Psoas muscle (tissue), 8 donors: ENCODE measurements at regions of chr12 and their contacts with region 1.

Region 1: DNA sequence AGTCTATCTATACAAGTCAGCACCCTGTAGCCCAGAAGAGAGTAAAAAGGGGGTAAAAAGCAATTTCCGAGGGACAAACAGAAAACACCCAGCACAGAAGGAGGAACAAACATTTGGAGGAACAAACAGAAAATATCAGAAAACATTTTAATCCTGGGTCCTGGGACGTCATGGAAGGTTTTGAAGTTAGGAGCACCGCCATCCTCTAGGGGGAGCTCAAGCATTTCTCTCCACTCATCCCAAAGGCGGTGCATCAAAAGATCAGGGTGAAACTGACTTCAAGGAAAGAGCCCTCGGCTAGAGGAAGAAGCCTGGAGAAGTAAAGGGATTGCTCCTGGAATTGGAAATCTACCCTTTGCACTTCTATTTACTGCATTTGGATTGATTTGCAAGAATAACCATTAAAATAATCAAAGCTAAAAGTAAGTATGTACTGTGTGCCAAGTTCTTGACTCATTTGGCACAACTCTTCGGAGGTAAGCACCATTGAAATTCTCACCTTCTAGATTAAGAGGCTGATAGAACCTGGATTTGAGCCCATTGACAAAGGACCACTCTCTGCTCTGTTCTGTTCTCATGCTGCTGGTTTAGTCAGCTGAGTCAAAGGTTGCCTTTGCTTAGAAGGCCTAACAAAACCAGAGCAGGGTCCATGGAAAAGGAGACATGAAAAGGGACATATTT is 17.2 kb upstream of the POC1B start:
- DNase-seq: peak; percentile 31 to 62
- ATAC-seq: peak; percentile 70 to 88 (median 76)
- H3K4me3 ChIP-seq: no peak overlapping the region
- H3K27ac ChIP-seq: no peak overlapping the region
- H3K4me1 ChIP-seq: peaks cover 6% of the 10 kb centered on the region
- H3K27me3 ChIP-seq: no peaks in the 10 kb centered on the region
- CTCF ChIP-seq: peak; percentile 88

Region 2: DNA sequence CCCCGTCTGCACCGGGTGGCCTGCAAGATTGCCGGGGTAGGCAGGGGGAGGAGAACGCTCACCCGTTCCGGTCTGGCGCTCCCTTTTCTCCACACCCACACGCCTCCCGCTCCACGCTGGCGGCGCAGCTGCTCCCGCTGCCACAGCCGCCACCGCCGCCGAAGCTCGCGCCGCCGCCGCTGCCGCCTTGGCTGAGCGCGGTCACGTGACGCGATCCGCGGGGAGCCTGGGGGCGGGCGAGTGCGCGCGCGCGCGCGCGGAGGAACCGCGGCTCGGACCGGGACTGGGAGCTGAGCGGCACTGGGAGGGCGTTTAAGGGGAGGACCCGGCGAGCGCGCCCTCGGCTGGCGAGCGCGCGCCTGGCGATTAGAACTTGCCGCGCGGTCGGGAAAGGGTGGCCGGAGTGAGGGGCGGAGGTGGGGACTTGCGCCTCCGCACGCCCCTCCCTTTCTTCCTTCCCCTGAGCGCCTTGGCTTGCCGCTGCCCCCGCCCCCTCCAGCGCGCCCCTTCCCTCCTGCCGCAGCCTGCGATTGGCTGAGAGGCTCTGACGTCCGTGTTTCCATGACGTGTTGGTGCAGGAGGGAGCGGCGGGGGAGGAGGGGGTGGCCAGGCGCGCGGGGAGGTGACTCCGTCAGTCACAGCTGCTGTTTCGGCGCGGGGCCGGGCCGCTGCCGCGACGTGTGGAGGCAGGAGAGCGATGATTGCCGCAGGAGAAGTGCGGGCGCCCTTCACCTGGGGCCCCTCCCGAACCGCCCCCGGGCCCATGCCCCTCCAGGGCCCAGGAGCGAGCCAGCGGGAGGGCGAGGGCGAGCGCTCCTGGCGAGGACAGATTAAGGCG is 166.3 kb after region 1 on chr12:
- intact Hi-C with region 1: loop called in 1 of 2 experiments (anchors 5 kb)
- DNase-seq: peak; percentile 99
- ATAC-seq: peak; percentile 89 to 91 (median 90)
- H3K4me3 ChIP-seq: peak overlapping the region; percentile 91
- H3K27ac ChIP-seq: peak overlapping the region; percentile 94
- H3K4me1 ChIP-seq: peaks cover 23% of the 10 kb centered on the region
- H3K27me3 ChIP-seq: no peaks in the 10 kb centered on the region
- CTCF ChIP-seq: no peak

Region 3: DNA sequence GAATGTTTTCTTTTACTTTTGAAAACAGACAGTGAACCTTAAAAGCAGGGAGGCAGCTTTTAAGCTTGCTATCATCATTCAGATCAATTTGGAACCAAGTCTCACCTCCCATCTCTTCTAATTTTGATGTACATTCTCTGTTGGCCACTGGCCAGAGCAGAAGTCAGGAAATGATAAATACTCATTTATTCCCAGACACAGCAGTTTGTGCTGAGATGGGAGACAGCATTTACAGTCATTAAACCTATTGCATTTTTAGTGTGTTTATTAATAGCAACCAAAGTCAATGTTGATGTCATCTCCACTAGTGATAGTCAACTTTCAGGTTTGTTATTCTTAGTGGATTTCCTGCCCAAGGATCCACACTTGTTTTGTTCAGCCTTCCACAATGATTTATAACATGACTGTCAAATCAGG is 485.6 kb after region 1 on chr12:
- intact Hi-C with region 1: loop called in 1 of 2 experiments (anchors 10 kb)
- DNase-seq: no peak
- ATAC-seq: peak in 3 of 4 donors; percentile 41 to 76 (median 68)
- H3K4me3 ChIP-seq: no peak overlapping the region
- H3K27ac ChIP-seq: peak overlapping the region; percentile 78
- H3K4me1 ChIP-seq: peaks cover 15% of the 10 kb centered on the region
- H3K27me3 ChIP-seq: no peaks in the 10 kb centered on the region
- CTCF ChIP-seq: no peak

Region 4: GRCh38 chr12:90058704-90059103 is 515.7 kb after region 1 on chr12:
- intact Hi-C with region 1: no loop called
- DNase-seq: no peak
- ATAC-seq: no peak
- H3K4me3 ChIP-seq: no peak overlapping the region
- H3K27ac ChIP-seq: no peak overlapping the region
- H3K4me1 ChIP-seq: peaks cover 10% of the 10 kb centered on the region
- H3K27me3 ChIP-seq: no peaks in the 10 kb centered on the region
- CTCF ChIP-seq: no peak

Region 5: GRCh38 chr12:90102957-90103652 is 560.1 kb after region 1 on chr12:
- intact Hi-C with region 1: loop called (anchors 2 to 5 kb)
- DNase-seq: no peak
- ATAC-seq: peak in 2 of 4 donors; percentile 54 to 56
- H3K4me3 ChIP-seq: no peak overlapping the region
- H3K27ac ChIP-seq: no peak overlapping the region
- H3K4me1 ChIP-seq: no peaks in the 10 kb centered on the region
- H3K27me3 ChIP-seq: no peaks in the 10 kb centered on the region
- CTCF ChIP-seq: peak; percentile 45

Region 6: DNA sequence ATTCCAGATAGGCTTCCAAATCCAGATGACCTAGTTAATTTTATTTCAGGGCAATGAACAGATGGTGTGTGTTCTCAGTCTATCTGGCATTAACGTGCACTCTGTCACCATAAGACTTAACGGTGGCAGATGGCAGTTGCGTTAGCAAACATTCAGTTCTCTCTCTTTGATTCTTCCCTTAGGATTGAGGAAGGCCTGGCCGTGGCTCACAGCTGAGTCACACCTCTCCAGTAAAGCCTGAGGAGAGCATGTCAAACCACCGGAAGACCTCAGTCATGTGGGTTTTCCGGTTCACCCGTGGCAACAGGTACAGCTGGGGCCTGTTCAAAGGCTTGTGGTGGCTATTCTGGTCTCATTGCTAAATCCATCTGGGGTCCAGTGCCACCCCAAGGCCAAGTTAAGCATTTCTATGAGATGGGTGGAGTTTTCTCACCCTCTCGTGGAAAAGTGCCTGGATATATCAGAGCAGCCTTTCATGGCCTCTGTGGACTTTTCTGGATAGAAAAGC is 710.7 kb after region 1 on chr12:
- intact Hi-C with region 1: loop called in 1 of 2 experiments (anchors 5 kb)
- DNase-seq: peak; percentile 81 to 92
- ATAC-seq: peak; percentile 96 to 100 (median 98)
- H3K4me3 ChIP-seq: peak overlapping the region; percentile 9
- H3K27ac ChIP-seq: peak overlapping the region; percentile 73
- H3K4me1 ChIP-seq: peaks cover 42% of the 10 kb centered on the region
- H3K27me3 ChIP-seq: no peaks in the 10 kb centered on the region
- CTCF ChIP-seq: peak; percentile 41

Region 7: GRCh38 chr12:90854136-90854689 is 1311.2 kb after region 1 on chr12:
- intact Hi-C with region 1: loop called in 1 of 2 experiments (anchors 10 kb)
- DNase-seq: no peak
- ATAC-seq: no peak
- H3K4me3 ChIP-seq: no peak overlapping the region
- H3K27ac ChIP-seq: no peak overlapping the region
- H3K4me1 ChIP-seq: no peaks in the 10 kb centered on the region
- H3K27me3 ChIP-seq: no peaks in the 10 kb centered on the region
- CTCF ChIP-seq: peak; percentile 59

Region 8: GRCh38 chr12:90940872-90941499 is 1397.9 kb after region 1 on chr12:
- intact Hi-C with region 1: loop called in 1 of 2 experiments (anchors 10 kb)
- DNase-seq: no peak
- ATAC-seq: no peak
- H3K4me3 ChIP-seq: no peak overlapping the region
- H3K27ac ChIP-seq: no peak overlapping the region
- H3K4me1 ChIP-seq: no peaks in the 10 kb centered on the region
- H3K27me3 ChIP-seq: no peaks in the 10 kb centered on the region
- CTCF ChIP-seq: peak; percentile 45